Caki2 (cell line): ENCODE measurements at regions of chr22 and their contacts with region 1.

Region 1: DNA sequence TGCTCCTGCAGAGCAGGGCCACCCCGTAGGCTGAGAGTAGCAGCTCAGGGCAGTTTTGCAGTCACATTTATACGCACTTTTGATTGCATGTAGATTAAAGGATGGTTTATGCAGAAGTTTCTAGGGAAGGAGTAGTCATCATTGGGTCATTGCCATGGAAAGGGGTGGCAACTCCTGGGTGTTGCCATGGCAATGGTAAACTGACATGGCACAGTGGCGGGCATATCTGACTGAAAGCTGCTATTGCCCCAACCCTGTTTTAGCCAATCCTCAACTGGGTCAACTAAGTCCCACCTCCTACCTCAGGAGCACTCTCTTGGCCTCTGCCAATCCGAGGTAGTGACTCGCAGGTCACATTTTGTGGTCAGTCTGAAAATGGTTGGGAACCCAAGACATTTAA is 2.4 kb upstream of the ARSA start:
- DNase-seq: peak; percentile 82

Region 2: DNA sequence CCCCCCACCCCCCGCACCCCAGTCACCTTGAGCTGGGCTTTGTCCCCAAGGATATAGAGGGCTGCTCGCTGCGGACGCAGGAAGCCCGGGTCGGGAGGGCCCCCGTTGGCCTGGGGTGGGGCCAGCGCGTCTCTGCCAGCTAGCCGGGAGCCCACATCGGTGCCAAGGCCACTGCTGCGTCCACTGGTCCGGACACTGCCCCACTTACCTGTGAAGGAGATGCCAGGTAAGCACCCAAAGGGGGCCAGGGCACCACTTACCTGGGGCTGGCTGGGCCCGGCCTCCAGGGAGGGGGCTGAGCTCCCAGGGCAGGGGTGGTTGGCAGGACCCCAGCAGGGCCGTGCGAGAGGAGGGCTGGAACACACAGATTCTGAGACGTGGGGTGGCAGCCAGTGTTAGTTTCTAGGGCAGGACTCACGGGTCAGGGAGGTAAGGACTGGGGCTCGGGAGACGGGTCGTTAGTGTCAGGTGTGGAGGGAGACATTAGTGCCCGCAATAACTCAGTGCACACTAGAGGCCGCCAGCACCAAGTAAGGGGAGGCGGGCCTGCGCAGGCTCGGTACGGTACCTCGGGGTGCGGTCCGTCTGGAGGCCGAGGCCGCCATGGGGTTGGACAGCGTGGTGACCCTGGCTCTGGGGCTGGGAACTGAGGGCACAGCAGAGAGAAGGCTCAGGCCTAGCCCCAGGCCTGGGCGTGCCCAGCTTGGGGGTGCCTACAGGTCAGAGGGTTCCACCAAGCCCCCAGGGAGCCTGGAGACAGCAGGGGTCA is 173.7 kb before region 1 on chr22:
- in situ Hi-C with region 1: no loop called
- DNase-seq: no peak

Region 3: GRCh38 chr22:50665738-50666137 is 35.4 kb after region 1 on chr22:
- in situ Hi-C with region 1: loop called (anchors 5 kb)
- DNase-seq: no peak